Activated T-helper 2 cell treated with anti-CD3 and anti-CD28 coated beads, Interferon-gamma antibody, Interleukin-2, Interleukin-4, amounts not matched to agents 10 μg/mL and 5 μg/mL and 100 μg/mL, durations not matched to agents 14 hours and 24 hours and 36 hours (primary cell): ENCODE measurements at regions of chr12 and their contacts with region 1.

Region 1: GRCh38 chr12:9732921-9733461 is at the start of gene CLECL1:
- DNase-seq: no peak
- H3K4me3 Mint-ChIP-seq: peak within 1 kb of the TSS; percentile 89
- H3K27ac Mint-ChIP-seq: peak within 1 kb of the TSS; percentile 93
- H3K4me1 Mint-ChIP-seq: peaks cover 73% of the 10 kb centered on the region
- H3K27me3 Mint-ChIP-seq: no peaks in the 10 kb centered on the region
- total RNA-seq, gene CLECL1: 16.8 and 17.2 TPM in 2 replicates

Region 2: GRCh38 chr12:9244894-9245293 is 488.1 kb before region 1 on chr12:
- intact Hi-C with region 1: loop called (anchors 10 kb)
- DNase-seq: peak; percentile 13
- H3K4me3 Mint-ChIP-seq: no peak overlapping the region
- H3K27ac Mint-ChIP-seq: peak overlapping the region; percentile 95
- H3K4me1 Mint-ChIP-seq: peaks cover 39% of the 10 kb centered on the region
- H3K27me3 Mint-ChIP-seq: peaks cover 11% of the 10 kb centered on the region

Region 3: DNA sequence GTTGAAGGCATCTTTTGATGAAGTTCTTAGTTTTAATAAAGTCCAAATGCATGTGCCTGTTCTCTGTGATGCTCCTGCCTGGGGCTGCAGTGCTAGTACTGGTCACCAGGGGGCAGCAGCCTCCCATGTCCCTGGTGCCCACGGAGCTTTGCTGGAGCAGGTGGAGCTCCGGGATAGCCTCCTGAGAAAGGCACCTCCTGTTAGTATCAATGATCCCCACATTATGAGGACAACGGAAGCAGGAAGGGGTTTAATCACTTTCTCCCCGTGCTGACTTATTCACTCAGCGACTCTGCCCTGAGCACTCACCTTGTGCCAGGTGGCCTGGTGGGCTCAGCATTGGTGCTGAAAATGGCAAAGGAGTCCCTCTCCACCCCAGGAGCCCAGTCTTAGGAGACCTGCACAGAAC is 401.8 kb before region 1 on chr12:
- intact Hi-C with region 1: loop called (anchors 10 kb)
- DNase-seq: peak; percentile 49
- H3K4me3 Mint-ChIP-seq: no peak overlapping the region
- H3K27ac Mint-ChIP-seq: no peak overlapping the region
- H3K4me1 Mint-ChIP-seq: peaks cover 17% of the 10 kb centered on the region
- H3K27me3 Mint-ChIP-seq: no peaks in the 10 kb centered on the region

Region 4: GRCh38 chr12:9647825-9648700 is 84.9 kb before region 1 on chr12:
- intact Hi-C with region 1: loop called (anchors 2 kb)
- DNase-seq: peak; percentile 95
- H3K4me3 Mint-ChIP-seq: peak overlapping the region; percentile 94
- H3K27ac Mint-ChIP-seq: peak overlapping the region; percentile 96
- H3K4me1 Mint-ChIP-seq: peaks cover 46% of the 10 kb centered on the region
- H3K27me3 Mint-ChIP-seq: no peaks in the 10 kb centered on the region

Region 5: GRCh38 chr12:9699898-9700605 is 32.9 kb before region 1 on chr12:
- intact Hi-C with region 1: loop called (anchors 5 kb)
- DNase-seq: no peak
- H3K4me3 Mint-ChIP-seq: no peak overlapping the region
- H3K27ac Mint-ChIP-seq: peak overlapping the region; percentile 24
- H3K4me1 Mint-ChIP-seq: peaks cover 64% of the 10 kb centered on the region
- H3K27me3 Mint-ChIP-seq: no peaks in the 10 kb centered on the region

Region 6: GRCh38 chr12:9749640-9750039 is 16.6 kb after region 1 on chr12:
- intact Hi-C with region 1: no loop called
- DNase-seq: no peak
- H3K4me3 Mint-ChIP-seq: no peak overlapping the region
- H3K27ac Mint-ChIP-seq: no peak overlapping the region
- H3K4me1 Mint-ChIP-seq: peaks cover 44% of the 10 kb centered on the region
- H3K27me3 Mint-ChIP-seq: peaks cover 1% of the 10 kb centered on the region

Region 7: DNA sequence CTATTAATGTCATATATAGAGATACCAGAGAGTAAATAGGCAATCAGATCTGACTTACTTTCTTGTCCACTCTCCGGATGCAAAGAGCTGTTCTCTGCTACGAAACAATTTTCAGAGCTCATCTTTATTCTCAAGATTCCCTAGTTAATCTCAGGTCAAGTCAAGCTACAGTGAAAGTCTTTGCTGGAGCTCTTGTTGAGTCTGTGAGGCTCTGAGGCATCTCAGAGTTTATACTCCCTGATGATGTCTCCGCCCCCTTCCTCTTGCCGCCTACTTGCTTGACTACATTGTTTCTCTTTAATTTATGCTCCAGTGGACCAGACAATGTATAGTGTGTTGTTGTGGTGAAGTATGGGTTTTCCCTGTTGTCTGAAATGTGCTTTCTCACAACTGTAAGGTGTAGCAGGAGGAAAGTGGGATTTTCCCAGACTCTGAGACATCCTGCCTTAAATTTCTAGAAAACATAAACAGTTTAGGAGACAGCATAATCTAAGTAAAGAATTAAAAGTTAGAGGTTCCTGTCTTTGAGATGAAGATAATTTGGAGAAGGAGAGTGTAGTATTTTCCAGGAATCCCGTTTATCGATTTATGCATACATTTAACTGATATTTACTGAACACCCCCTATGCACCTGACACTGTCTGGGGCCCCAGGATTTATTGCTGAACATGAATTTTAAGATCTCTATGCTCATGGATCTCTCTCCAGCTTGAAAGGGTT is 27.9 kb after region 1 on chr12 and contains the start of gene CD69:
- intact Hi-C with region 1: loop called (anchors 2 kb)
- DNase-seq: peak; percentile 83
- H3K4me3 Mint-ChIP-seq: peak within 1 kb of the TSS; percentile 99
- H3K27ac Mint-ChIP-seq: peak within 1 kb of the TSS; percentile 96
- H3K4me1 Mint-ChIP-seq: peaks cover 48% of the 10 kb centered on the region
- H3K27me3 Mint-ChIP-seq: no peaks in the 10 kb centered on the region
- total RNA-seq, gene CD69: 70.9 and 72.2 TPM in 2 replicates

Region 8: GRCh38 chr12:10082117-10082874 is 349.3 kb after region 1 on chr12:
- intact Hi-C with region 1: no loop called
- DNase-seq: no peak
- H3K4me3 Mint-ChIP-seq: no peak overlapping the region
- H3K27ac Mint-ChIP-seq: no peak overlapping the region
- H3K4me1 Mint-ChIP-seq: no peaks in the 10 kb centered on the region
- H3K27me3 Mint-ChIP-seq: peaks cover 18% of the 10 kb centered on the region